ENCODE measurements at regions of chr1 and their contacts with region 1.

Region 1: DNA sequence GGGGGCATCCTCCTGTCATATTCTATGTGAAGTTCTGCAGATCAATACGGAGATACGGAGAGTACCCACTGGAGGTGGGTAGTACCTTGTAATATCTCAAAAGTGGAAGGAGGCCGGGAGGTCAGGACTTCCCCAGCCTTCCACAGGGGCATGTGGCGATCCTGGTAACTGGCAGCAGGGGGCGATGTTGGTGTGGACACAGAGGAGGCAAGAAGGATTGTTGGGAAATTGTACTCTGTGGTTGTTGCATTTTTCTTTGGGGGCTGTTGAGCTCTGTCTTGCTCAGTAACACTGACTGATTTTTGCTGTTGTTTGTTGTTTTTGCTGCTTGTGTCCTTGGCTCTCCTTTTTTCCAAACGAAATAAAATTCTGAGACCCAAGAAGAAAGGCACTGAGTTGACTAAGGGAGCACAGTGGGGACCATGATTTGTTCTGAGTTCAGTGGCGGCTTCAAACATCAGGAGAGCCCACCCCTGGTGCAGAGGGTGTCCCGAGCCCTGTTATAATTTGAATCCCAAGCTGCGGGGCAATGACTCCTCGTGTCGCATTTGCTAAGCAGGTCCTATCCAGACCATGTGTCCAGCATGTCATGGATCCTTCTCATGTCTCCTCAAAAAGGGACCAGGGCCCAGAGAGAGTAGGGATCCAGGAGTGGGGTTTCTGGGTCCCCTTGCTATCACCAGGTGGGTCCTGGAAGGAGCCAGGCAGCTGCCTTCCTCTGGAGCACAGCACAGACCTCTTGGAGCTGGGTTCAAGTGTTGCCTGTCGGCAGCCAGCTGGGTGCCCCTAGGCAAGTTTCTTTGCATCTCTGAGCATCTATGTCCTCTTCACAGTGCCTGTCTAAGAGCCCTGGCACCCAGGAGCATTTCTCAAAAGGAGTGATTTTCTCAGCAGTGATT is 22.8 kb downstream of the LHX4 start:
- DNase-seq: peak in 3 of 5 donors; percentile 21 to 81 (median 46)
- H3K4me3 ChIP-seq: no peak overlapping the region
- H3K27ac ChIP-seq: no peak overlapping the region
- H3K4me1 ChIP-seq: peaks cover 0 to 8% (median 0%) of the 10 kb centered on the region in 3 donors
- H3K27me3 ChIP-seq: no peaks in the 10 kb centered on the region
- CTCF ChIP-seq: peak; percentile 71

Region 2: DNA sequence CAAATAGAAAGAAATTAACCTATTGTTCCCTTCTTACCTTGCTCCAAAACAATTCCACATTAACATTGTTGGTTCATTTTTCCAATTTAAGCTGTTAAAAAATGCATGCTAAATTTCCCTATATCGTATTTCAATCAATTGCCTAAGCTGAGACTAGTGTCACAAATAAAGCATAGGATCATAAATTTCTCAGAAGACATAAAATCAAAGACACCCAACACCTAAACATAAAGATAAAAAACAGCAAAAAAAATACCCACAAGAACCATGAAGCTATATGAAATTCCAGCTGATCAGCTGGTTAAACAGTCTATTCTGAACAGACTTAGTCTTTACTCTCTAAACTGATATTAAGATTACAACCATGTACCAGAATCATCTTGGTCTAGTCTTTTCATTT is 217.1 kb after region 1 on chr1:
- intact Hi-C with region 1: loop called (anchors 10 kb)
- DNase-seq: no peak
- H3K4me3 ChIP-seq: no peak overlapping the region
- H3K27ac ChIP-seq: no peak overlapping the region
- H3K4me1 ChIP-seq: no peaks in the 10 kb centered on the region
- H3K27me3 ChIP-seq: no peaks in the 10 kb centered on the region
- CTCF ChIP-seq: no peak